ENCODE measurements at regions of chr19 and their contacts with region 1.

Region 1: GRCh38 chr19:15264061-15264932 is 32.0 kb upstream of the EPHX3 start:
- DNase-seq: peak; percentile 53 to 96 (median 78)

Region 2: GRCh38 chr19:15280915-15281683 is 16.8 kb after region 1 on chr19:
- intact Hi-C with region 1: no loop called
- DNase-seq: peak; percentile 70 to 98 (median 84)

Region 3: GRCh38 chr19:15332311-15332996 is 68.2 kb after region 1 on chr19 and contains the start of gene BRD4:
- intact Hi-C with region 1: loop called (anchors 5 kb)
- DNase-seq: peak; percentile 50 to 95 (median 68)

Region 4: DNA sequence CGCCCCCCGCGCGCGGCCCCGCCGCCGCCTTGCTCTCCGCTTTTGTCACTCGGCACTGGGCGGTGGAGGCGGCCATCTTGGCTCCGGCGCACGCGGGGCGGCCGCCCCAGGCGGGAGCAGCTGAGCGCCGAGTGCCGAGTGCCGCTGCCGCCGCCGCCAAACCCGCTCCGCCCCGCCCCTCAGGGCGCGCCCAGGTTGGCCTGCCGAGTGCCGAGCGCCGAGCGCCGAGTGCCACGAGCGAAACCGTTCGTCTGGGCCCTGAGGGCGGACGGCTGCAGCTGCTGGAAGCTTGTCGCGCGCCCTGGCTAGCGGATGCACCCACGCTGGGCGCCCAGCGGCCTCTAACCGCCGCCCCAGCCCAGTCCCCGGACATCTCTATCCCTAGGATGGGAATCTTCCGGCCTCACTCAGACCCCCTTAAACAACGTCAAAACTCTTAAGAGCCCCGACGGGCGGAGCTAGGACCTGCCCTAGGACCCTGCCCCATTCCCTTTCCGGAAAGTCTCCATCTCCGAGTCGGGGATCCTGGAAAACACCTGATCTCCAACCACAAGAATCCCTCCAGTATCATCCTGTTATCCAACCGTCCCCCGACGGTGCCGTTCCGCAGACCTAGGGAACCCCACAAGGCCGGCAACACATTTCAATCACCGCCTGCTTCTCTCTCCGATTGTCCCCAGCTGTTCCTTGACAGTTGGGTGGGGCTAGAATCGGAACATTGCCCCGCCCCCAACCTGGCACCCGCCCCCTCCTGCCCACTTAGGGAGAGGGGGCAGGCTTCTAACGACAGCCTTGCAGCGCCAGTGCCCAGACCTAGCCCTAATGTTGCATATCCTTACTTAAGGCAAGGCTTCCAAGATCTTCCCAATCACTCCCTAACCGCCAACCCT is 168.6 kb after region 1 on chr19:
- intact Hi-C with region 1: loop called (anchors 5 kb)
- DNase-seq: peak; percentile 88 to 99 (median 93)

Region 5: DNA sequence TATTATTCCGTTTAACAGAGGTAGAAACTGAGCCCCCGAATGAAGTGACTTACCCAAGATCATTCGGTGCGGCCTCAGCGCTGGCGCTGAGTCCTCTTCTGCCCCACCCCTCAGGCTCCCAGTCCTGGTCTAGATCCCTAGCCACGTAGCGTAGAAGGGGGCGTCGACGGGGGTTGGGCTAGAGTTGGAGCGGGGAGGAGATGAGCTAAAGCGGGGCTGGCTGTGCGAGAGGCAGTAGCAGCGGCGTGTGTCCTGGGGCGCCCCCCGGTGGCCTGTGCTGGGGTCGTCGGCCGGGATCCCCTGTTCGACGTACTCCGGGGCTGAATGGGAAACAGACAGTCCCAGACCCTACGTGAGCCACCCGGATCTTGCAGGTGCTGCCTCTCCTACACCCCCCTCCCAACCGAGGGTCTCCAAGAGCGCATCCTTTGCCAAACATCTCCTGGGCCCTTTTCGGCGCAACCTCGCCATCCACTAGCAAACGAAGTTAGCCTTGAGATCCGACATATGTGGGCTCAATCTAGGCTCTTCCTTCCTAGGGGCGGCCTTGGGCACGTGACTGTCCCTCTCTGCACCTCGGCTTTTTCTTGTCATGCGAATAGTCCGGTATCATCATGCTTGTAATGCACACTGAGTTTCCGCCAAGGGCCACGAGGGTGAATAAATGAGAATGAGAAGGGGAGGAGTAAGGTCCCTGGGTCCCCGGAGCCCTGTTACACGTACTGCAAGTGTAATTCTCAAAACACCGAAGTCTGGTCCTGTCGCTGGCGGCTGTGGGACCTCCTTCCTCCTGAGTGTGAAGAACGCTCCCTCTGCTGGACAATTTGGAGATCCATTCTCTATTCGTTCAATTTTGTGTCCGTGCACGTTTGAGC is 291.7 kb after region 1 on chr19:
- intact Hi-C with region 1: loop called (anchors 1 kb)
- DNase-seq: peak; percentile 47 to 95 (median 76)